Heart right ventricle (tissue), 16 donors: ENCODE measurements at regions of chr14 and their contacts with region 1.

Region 1: DNA sequence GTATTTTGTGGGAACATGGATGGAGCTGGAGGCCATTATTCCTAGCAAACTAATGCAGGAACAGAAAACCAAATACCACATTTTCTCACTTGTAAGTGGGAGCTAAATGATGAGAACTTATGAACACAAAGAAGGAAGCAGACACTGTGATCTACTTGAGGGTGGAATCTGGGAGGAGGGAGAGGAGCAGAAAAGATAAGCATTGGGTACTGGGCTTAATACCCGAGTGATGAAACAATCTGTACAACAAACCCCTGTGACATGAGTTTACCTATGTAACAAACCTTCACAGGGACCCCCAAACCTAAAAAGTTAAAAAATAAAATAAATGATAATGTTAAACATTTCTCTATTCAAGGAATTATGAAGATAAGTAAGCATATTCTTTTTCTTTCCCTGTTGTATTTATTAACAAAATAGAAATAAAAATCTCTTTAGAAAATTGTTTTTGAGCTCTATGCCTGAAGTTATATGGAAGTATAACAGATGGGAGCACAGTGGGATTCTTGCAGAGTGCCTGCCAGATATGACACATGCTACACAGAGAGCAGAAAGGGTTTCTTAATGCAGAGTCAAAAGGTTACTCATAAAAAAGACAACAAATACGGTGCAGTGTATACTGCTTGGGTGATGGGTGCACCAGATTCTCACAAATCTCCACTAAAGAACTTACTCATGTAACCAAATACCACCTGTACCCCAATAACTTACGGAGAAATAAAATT is 52.0 kb upstream of the SYNE2 start:
- DNase-seq: no peak
- ATAC-seq: no peak
- H3K4me3 ChIP-seq: no peak overlapping the region
- H3K27ac ChIP-seq: no peak overlapping the region
- H3K4me1 ChIP-seq: peaks cover 0 to 9% (median 0%) of the 10 kb centered on the region in 9 donors
- H3K27me3 ChIP-seq: no peaks in the 10 kb centered on the region
- CTCF ChIP-seq: no peak

Region 2: DNA sequence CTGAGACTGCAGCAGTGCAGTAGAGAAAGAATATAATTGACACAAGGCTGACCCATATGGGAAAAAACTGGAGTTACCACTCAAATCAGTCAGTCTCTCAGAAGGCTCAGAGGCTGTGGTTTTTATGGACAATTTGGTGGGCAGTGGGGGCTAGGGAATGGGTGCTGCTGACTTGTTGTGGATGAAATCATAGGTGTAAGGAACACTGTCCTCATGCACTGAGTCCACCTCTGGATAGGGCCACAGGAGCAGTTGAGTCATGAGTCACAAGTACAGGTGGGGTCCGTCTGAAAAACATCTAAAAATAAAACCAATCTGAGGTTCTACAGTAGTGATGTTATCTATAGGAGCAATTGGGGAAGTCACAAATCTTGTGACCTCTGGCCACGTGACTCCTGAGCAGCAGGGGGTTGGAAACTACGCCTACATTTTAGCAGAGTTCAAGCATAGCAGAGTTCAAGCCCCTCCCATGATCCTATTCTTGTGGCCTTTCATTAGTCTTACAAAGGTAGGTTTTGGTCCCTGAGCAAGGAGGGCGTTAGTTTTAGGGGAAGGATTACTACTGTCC is 54.9 kb before region 1 on chr14:
- intact Hi-C with region 1: no loop called
- DNase-seq: no peak
- ATAC-seq: no peak
- H3K4me3 ChIP-seq: no peak overlapping the region
- H3K27ac ChIP-seq: no peak overlapping the region
- H3K4me1 ChIP-seq: no peaks in the 10 kb centered on the region
- H3K27me3 ChIP-seq: peaks cover 0 to 17% (median 0%) of the 10 kb centered on the region in 7 donors
- CTCF ChIP-seq: no peak

Region 3: GRCh38 chr14:64005822-64006221 is 205.0 kb after region 1 on chr14:
- intact Hi-C with region 1: loop called in 1 of 10 experiments (anchors 10 kb)
- DNase-seq: no peak
- ATAC-seq: no peak
- H3K4me3 ChIP-seq: no peak overlapping the region
- H3K27ac ChIP-seq: no peak overlapping the region
- H3K4me1 ChIP-seq: no peaks in the 10 kb centered on the region
- H3K27me3 ChIP-seq: no peaks in the 10 kb centered on the region
- CTCF ChIP-seq: no peak